ENCODE measurements at regions of chr20 and their contacts with region 1.

Region 1: GRCh38 chr20:60210779-60211617 is 252.8 kb downstream of the CDH26 start:
- DNase-seq: peak; percentile 87
- ATAC-seq: peak; percentile 94

Region 2: DNA sequence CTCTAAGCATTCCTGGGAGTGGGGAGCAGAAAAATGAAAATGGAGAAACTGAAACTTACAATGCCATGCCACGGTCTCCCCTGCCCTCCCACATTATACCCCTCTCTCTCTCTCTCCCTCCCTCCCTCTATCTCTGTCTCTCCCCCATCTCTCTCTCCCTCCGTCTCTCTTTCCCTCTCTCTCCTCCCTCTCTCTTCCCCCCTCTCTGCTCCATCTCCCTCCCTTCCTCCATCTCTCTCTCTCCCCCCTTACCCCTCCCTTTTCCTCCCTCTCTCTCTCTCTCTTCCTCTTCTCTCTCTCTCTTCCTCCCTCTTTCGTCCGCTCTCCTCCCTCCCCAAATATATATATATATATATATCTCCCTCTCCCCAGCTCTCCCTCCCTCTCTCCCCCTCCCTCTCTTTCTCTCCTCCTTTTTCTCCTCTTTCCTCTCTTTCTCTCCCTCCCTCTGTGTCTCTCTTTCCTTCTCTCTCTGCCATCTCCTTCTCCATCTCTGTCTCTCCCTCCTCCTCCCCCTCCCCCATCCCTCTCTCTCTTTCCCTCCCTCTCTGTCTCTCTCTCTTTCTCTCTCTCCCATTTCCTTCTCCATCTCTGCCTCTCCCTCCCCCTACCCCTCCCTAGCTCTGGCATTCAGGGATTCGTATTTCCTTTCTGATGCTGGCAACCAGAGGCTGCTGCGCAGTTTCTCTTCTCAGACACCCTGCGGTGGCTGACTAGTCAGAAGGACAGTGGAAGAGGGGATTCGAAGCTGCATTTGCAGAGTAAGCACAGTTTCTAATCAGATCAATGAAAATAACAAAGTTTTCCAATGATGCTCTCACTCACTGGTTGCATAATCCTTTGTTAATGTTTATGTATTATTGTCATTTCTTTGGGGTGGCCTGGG is 1835.8 kb before region 1 on chr20:
- intact Hi-C with region 1: no loop called
- DNase-seq: no peak
- ATAC-seq: no peak

Region 3: GRCh38 chr20:60057123-60057801 is 153.7 kb before region 1 on chr20:
- intact Hi-C with region 1: loop called (anchors 5 kb)
- DNase-seq: peak; percentile 81
- ATAC-seq: peak; percentile 69

Region 4: GRCh38 chr20:60078351-60079250 is 132.4 kb before region 1 on chr20:
- intact Hi-C with region 1: no loop called
- DNase-seq: no peak
- ATAC-seq: no peak

Region 5: GRCh38 chr20:60271597-60271996 is 60.6 kb after region 1 on chr20:
- intact Hi-C with region 1: no loop called
- DNase-seq: no peak
- ATAC-seq: no peak

Region 6: GRCh38 chr20:61220160-61220559 is 1009.2 kb after region 1 on chr20:
- intact Hi-C with region 1: loop called (anchors 10 kb)
- DNase-seq: no peak
- ATAC-seq: no peak